ENCODE measurements at regions of chr5 and their contacts with region 1.

Region 1: DNA sequence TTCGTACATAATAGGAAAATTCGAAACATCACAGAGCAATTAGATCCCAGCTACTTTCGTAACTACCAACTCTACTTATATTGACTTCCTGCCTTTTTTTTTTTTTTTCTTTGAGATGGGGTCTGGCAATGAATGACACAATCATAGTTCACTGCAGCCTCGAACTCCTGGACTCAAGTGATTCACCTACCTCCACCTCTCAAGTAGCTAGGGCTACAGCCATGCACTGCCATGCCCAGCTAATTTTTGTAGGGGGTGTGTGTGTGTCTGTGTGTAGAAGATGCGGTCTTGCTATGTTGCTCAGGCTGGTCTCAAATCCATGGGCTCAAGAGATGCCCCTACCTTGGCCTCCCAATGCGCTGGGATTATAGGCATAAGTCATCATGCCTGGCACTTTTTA is 5.8 kb upstream of the PAIP2 start:
- DNase-seq: no peak
- H3K4me3 Mint-ChIP-seq: no peak overlapping the region
- H3K27ac Mint-ChIP-seq: no peak overlapping the region
- H3K4me1 Mint-ChIP-seq: peaks cover 11% of the 10 kb centered on the region
- H3K27me3 Mint-ChIP-seq: no peaks in the 10 kb centered on the region

Region 2: DNA sequence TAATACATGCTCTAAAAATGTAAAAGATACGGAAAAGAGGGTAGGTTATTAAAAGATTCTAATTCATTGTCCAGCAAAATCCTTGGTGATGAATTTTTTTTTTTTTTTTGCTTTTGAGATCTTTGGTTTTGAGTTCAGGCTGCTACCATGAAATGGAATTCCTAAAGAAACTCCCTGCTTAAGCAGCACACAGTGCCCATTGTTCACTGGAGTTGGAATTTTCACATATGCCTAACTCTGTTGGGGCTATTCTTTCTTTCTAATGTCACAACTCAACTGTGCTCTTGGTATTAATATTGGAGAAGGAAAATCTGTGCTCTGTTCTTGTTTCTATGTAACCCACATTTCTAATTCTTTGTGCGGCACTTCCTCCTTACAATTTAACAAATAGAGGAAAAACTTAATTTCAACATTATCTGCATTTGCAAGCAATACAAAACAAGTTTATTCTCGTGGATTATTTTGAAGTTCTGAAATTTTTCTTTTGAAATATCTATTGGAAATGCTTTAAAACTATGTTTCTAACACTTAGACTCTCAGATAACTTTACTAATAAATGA is 20.7 kb before region 1 on chr5:
- CTCF ChIA-PET with region 1: interaction called, 10 read pairs
- POLR2A ChIA-PET with region 1: no interaction called
- DNase-seq: no peak
- H3K4me3 Mint-ChIP-seq: no peak overlapping the region
- H3K27ac Mint-ChIP-seq: no peak overlapping the region
- H3K4me1 Mint-ChIP-seq: peaks cover 28% of the 10 kb centered on the region
- H3K27me3 Mint-ChIP-seq: no peaks in the 10 kb centered on the region

Measured in activated CD4-positive, alpha-beta T cell treated with anti-CD3 and anti-CD28 coated beads, Interleukin-2, amount 10 ng/mL, durations not matched to agents 7 days and 5 days (primary cell).